Activated CD8-positive, alpha-beta memory T cell treated with anti-CD3 and anti-CD28 coated beads, Interleukin-2, amount 10 ng/mL, durations not matched to agents 7 days and 5 days (primary cell): ENCODE measurements at regions of chr15 and their contacts with region 1.

Region 1: DNA sequence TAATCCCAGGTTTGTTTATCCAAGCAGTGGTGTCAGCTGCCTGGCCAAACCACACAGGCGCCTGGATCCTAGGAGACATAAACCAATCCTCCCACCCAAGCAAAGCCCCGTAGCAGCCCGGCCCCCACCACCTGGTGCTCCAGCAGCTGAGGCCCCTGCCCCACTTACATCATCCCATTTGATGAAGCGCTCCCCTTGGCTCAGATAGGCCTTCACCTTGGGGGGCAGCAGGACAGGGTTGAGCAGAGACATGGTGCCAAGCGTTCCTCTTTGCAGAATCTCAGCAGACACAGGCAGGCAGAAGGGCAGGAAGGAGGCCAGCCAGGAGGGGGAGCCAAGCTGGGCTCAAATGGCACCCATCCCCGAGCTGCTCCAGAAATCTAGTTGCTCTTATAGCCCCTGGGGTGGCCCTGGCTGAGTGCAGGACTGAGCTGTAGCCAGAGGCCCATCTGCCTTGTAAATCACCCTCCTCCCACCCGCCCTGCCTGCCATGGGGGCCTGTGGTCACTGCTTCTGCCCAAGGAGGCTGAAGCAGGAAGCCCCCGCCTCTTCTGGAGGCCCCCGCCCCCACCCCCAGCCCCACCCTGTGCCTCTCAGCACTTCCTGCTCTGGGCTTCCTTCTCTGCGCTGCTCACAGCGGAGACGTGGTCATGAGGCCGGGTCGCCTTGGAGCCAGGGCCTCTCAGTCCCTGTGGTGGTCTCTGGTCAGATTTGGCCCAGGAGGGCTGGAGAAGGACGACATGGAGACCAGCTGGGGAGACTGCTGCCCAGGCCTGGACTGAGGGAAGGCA is at the start of gene PLCB2:
- DNase-seq: peak; percentile 81
- ATAC-seq: peak; percentile 78
- H3K4me3 Mint-ChIP-seq: peak within 1 kb of the TSS; percentile 91
- H3K27ac Mint-ChIP-seq: peak within 1 kb of the TSS; percentile 96
- H3K4me1 Mint-ChIP-seq: peaks cover 30% of the 10 kb centered on the region
- H3K27me3 Mint-ChIP-seq: peaks cover 9% of the 10 kb centered on the region
- total RNA-seq, gene PLCB2: 104 to 120 TPM

Region 2: DNA sequence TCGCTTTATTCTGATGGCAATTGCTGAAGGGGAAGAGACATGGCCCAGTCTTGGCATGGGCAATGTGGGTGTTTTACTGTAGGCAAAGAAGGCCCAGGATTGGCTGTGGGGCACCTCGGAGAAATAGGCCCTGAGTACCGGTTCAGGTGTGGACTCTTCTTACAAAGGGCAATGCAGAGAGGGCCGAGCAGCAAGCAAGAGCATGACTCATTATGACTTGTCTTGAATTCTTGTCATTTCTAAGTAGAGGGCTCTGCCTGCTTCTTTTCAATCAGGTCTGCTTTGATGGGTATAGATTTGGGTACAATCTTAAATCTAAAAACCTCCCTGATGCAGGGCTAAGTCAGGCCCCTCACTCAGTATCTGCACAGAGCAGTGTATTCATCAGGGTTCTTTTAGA is 161.6 kb before region 1 on chr15:
- CTCF ChIA-PET with region 1: no interaction called
- DNase-seq: peak; percentile 35
- ATAC-seq: no peak
- H3K4me3 Mint-ChIP-seq: no peak overlapping the region
- H3K27ac Mint-ChIP-seq: no peak overlapping the region
- H3K4me1 Mint-ChIP-seq: no peaks in the 10 kb centered on the region
- H3K27me3 Mint-ChIP-seq: peaks cover 11% of the 10 kb centered on the region

Region 3: DNA sequence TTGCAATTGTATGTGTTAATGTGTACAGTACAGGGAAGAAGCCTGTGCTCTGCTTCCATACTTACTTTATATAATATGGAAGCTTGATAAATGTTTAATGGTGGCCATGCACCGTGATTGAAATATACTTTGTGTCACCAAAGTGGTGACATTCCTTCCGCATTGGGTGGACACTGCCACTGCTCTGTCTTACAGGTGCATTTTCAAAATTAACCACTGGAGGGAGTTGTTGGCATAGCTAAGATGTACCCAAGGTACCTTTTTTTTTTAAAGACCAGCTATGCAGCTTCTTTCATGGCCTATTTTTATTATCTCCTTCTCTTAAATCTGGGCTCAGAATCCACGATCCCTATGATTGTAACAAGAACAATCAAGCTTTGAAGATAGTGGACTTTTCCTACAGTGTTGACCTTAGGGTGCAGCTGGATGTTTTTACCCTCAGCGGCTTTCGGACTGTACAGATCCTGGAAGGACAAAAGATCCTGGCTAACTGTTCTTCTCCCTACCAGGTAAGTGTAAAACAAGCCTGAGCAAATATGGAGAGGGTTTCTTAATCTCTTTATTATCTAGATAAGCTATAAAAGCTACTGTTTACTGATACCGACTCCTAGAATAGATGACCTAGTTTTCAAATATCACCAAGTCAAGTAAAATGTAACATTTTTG is 90.3 kb before region 1 on chr15:
- CTCF ChIA-PET with region 1: interaction called, 17 read pairs
- DNase-seq: peak; percentile 54
- ATAC-seq: peak; percentile 91
- H3K4me3 Mint-ChIP-seq: no peak overlapping the region
- H3K27ac Mint-ChIP-seq: no peak overlapping the region
- H3K4me1 Mint-ChIP-seq: no peaks in the 10 kb centered on the region
- H3K27me3 Mint-ChIP-seq: no peaks in the 10 kb centered on the region

Region 4: DNA sequence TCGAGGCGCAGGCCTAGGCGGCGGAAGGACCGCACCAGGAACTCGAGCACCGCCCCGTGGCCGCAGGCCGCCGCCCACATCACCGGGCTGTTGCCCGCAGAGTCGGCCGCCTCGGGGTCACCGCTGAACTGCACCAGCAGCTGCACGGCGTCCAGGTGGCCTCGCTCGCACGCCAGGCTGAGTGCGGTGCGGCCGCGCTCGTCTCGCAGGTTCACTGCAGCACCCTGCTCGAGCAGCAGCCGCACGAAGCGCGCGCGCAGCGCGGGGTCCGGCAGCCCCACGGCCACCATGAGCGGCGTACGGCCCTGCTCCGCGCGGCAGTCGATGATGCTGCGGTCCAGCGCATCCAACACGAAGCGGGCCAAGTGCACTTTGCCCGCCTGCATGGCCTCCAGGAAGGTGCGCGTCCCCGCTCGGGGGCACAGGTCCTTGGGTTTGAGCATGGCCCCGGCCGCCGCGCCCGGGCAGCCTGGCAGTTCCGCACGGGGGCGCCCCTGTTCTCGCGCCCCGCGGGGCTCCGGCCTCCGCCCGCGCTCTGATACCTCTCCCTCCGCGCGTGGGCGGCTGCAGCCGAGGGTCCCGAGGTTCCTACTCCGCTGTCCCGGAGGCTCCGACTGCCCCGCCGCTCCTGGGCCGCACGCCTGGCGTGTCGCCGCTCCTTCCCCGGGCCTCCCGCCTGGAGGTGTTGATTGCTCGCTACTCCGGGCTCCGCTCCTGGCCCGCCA is 25.3 kb before region 1 on chr15:
- CTCF ChIA-PET with region 1: interaction called, 411 read pairs
- DNase-seq: peak; percentile 57
- ATAC-seq: peak; percentile 74
- H3K4me3 Mint-ChIP-seq: peak overlapping the region; percentile 58
- H3K27ac Mint-ChIP-seq: no peak overlapping the region
- H3K4me1 Mint-ChIP-seq: peaks cover 6% of the 10 kb centered on the region
- H3K27me3 Mint-ChIP-seq: peaks cover 50% of the 10 kb centered on the region

Region 5: GRCh38 chr15:40290918-40291574 is 16.6 kb before region 1 on chr15:
- CTCF ChIA-PET with region 1: interaction called, 101 read pairs
- DNase-seq: no peak
- ATAC-seq: no peak
- H3K4me3 Mint-ChIP-seq: no peak overlapping the region
- H3K27ac Mint-ChIP-seq: no peak overlapping the region
- H3K4me1 Mint-ChIP-seq: no peaks in the 10 kb centered on the region
- H3K27me3 Mint-ChIP-seq: no peaks in the 10 kb centered on the region

Region 6: DNA sequence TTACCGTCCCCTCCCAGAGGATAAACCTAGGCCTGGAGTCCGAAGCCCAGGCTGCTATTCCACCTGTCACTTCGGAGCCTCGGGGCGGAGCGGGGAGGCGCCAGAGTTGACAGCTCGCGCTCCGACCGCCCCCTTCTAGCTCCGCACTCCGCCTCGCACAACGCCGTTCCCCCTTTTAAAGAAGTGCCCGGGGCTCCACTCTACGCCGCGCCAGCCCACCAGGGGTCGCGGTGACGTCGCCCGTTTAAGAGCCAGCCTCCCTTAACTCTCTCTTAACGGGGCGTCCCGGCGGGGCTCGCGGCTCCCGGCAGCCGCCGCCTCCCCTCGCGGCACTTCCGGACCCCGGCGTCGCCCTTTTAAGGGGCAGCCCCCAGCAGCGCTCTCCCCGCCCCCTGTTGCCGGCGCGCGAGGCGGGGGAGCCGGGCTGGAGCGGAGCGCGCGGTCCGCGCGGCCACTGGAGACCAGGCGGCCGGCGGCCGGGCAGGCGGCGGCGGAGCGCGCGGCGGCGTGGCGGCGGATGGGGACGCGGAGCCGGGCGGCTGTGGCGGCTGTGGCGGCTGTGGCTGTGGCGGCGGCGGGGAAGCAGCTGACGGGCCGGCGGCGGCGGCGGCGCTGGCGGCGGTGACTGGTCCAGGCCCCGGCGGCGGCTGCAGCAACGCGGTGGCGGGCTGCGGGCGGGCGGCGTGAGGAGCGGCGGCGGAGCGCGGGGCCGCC is 15.8 kb after region 1 on chr15 and contains the start of gene INAFM2:
- CTCF ChIA-PET with region 1: interaction called, 146 read pairs
- DNase-seq: peak; percentile 93
- ATAC-seq: peak; percentile 92
- H3K4me3 Mint-ChIP-seq: peak within 1 kb of the TSS; percentile 67
- H3K27ac Mint-ChIP-seq: peak within 1 kb of the TSS; percentile 38
- H3K4me1 Mint-ChIP-seq: peaks cover 28% of the 10 kb centered on the region
- H3K27me3 Mint-ChIP-seq: peaks cover 16% of the 10 kb centered on the region
- total RNA-seq, gene INAFM2: 4.9 to 10.2 TPM

Region 7: DNA sequence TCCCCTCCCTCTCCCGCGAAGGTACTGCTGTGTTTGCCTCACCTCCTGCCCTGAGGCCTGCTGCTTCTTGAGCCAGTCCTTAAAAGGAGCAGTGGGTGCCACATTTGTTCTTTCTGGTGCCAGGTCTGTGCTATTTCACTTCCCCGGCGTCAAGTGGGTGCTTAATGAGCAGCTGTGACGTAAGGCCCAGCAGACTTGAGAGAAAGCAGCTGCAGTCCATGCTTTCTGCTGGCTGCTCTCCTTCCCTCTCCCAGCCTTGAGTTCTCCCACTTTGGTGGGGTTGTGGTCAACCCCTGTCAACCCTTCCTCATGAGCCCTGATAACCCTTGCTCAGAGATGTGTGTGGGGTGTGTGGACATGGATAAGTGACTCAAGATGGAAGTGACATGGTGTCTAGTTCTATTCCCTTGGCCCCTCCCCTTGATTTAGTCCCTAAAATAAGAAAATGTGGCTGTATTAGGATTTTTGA is 22.8 kb after region 1 on chr15:
- CTCF ChIA-PET with region 1: interaction called, 317 read pairs
- DNase-seq: no peak
- ATAC-seq: no peak
- H3K4me3 Mint-ChIP-seq: no peak overlapping the region
- H3K27ac Mint-ChIP-seq: no peak overlapping the region
- H3K4me1 Mint-ChIP-seq: peaks cover 13% of the 10 kb centered on the region
- H3K27me3 Mint-ChIP-seq: peaks cover 6% of the 10 kb centered on the region

Region 8: DNA sequence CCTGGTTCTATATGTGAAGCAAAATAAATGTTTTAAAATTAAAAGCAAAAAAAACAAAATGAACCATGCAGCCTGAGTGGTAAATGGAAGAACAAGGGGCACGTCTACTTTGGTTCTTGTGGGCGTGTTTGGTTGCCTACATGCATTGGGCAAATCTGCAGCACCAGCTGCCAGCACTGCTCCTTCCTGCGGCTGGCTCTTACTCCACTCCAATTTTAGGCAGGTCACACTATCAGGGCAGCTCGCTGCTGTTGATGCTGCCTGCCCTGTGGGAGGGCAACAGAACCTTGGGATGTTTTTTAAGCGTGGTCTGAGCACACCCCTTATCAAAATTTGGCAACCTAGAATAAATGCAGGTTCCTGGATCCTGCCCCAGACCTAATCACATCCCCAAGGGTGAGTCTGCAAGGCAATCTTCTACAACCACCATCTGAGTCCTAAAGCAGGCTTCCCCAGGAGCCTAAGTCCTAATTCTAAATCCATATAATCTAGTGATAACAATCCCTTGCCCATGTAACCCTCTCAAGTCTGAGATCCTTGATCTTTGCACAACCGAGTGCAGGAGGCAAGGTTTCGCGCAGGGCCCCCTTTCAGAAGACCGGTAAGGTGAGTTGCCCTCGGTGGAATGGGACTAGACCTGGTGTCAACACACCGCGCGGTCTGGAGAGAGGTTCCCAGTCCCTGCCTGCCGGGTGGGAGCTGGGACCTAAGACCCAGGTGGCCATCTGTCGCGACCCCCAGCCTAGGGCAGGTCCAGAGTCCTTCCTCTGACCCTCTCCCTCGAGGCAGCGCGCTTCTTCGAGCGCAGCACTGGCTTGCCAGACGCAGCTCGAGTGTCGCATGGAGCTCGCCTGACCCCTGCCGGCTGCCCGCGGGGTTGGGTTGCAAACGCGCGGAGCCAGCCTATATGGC is 113.9 kb after region 1 on chr15:
- CTCF ChIA-PET with region 1: interaction called, 21 read pairs
- DNase-seq: peak; percentile 87
- ATAC-seq: peak; percentile 99
- H3K4me3 Mint-ChIP-seq: no peak overlapping the region
- H3K27ac Mint-ChIP-seq: no peak overlapping the region
- H3K4me1 Mint-ChIP-seq: peaks cover 7% of the 10 kb centered on the region
- H3K27me3 Mint-ChIP-seq: no peaks in the 10 kb centered on the region

Region 9: GRCh38 chr15:40471806-40472727 is 164.5 kb after region 1 on chr15:
- CTCF ChIA-PET with region 1: no interaction called
- DNase-seq: no peak
- ATAC-seq: peak; percentile 16
- H3K4me3 Mint-ChIP-seq: peak overlapping the region; percentile 84
- H3K27ac Mint-ChIP-seq: peak overlapping the region; percentile 80
- H3K4me1 Mint-ChIP-seq: peaks cover 15% of the 10 kb centered on the region
- H3K27me3 Mint-ChIP-seq: peaks cover 3% of the 10 kb centered on the region

Region 10: DNA sequence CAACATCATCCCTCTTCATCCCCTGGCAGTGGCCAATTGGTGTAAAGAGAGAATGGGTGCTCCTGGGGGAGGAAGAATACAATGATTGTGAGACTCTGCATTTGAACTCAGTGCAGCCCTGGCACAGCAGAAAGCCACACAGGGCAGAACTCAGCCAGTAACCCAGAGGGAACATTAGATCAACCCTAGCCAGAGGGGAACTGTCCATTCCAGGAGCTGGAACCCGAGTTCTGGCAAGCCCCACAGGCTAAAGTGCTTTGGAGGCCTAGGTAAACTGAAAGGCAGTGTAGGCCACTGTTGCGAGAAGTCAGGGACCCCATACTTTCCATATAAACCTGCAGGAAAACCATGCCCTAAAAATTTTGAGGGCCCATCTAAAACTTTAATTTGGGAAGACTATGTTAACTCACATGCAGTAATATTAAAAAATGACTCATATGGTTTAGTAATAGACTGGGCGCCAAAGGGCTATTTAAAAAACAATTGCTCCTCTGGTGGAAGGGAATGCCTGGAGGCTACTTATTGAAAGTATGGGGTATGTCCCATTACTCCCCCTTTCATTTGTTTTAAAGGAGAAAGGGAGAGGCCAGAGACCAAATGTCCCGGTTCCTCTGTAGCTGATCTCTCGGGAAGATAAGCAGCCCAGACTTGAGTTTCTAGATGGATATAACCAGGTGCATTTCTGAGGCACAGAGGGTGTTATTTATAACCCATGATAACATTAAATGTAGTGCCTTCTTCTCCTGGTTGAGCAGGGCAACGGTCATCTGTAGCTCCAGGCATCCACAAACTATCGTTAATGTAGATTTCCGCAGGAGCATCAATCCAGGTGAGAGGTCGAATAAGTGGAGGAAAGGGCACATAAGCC is 381.6 kb after region 1 on chr15:
- CTCF ChIA-PET with region 1: no interaction called
- DNase-seq: no peak
- ATAC-seq: no peak
- H3K4me3 Mint-ChIP-seq: no peak overlapping the region
- H3K27ac Mint-ChIP-seq: no peak overlapping the region
- H3K4me1 Mint-ChIP-seq: peaks cover 7% of the 10 kb centered on the region
- H3K27me3 Mint-ChIP-seq: no peaks in the 10 kb centered on the region